ENCODE measurements at regions of chr2 and their contacts with region 1.

Region 1: DNA sequence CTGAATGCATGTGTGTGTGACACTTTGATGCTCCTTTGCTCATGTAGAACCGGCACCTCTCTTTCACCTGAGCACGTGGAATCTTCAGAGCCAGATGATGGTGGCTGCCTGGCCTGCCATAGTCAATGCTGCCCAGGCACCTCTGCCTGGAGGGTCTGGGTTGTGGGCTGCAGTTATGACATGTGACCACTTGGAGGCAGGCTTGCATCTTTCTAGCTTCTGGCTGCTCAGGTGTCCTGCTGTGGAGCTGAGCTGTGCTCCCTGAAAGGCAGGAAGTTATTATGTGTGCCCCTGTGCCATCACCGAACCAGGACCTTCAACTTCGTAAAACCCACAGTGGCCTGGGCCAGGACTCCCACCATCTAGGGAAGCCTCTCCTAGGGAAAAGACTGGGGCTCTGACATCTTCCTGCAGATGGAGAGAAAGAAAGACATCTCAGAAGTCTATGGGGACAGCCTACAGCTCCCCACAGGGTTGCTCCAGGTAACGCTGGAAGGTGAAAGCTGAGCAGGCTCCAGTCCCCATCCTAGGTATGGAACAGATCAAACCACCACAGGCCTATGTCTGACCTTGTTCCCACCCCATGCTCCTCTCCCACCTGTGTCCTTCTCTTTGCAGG is 30.2 kb downstream of the PSD4 start:
- DNase-seq: peak; percentile 56 to 89
- ATAC-seq: peak; percentile 79 to 92 (median 86)
- H3K4me3 ChIP-seq: no peak overlapping the region
- H3K4me3 Mint-ChIP-seq: no peak overlapping the region
- H3K27ac ChIP-seq: peak overlapping the region; percentile 24
- H3K27ac Mint-ChIP-seq: peak overlapping the region; percentile 70 to 82
- H3K4me1 ChIP-seq: peaks cover 8% of the 10 kb centered on the region
- H3K4me1 Mint-ChIP-seq: peaks cover 7 to 25% of the 10 kb centered on the region in 2 donors
- H3K27me3 ChIP-seq: no peaks in the 10 kb centered on the region
- H3K27me3 Mint-ChIP-seq: no peaks in the 10 kb centered on the region
- CTCF ChIP-seq: peak; percentile 70

Region 2: DNA sequence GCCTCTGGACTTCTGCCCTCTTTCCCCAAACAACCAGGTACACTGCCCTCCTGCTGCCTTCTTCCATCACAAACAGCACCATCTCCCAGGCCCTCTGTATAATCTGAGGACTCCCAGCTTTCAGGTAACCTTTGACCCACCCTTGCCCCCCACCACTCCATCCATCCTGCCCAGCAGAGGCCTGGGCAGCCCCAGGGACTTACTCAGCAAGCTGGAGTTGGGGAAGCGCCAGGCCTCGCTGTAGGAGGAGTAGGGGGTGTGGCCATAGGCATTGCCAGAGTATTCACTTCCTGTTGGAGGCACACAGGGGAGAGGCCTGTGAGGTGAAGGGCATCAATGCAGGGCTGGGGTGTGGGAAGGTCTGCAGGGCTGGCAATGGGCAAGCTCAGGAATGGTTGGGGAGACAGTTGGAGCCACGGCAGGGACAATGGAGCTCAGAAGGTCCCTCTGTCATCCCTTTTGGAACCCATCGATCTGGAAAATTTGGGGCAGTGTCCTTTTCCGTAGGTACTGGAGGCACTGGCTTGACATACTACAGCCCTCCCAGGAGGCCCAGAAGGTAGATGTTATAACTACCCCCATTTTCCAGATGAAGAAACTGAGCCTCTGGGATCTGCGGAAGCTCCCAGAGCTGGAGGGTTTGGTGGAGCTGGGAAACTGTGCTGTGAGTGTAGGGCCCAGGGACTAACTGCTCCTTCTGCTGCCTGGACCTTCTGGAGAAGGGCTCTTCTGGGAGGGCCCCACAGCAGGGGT is 16.1 kb after region 1 on chr2:
- intact Hi-C with region 1: no loop called
- DNase-seq: no peak
- ATAC-seq: no peak
- H3K4me3 ChIP-seq: no peak overlapping the region
- H3K4me3 Mint-ChIP-seq: no peak overlapping the region
- H3K27ac ChIP-seq: no peak overlapping the region
- H3K27ac Mint-ChIP-seq: no peak overlapping the region
- H3K4me1 ChIP-seq: peaks cover 23% of the 10 kb centered on the region
- H3K4me1 Mint-ChIP-seq: peaks cover 16 to 24% of the 10 kb centered on the region in 2 donors
- H3K27me3 ChIP-seq: no peaks in the 10 kb centered on the region
- H3K27me3 Mint-ChIP-seq: no peaks in the 10 kb centered on the region
- CTCF ChIP-seq: no peak

Region 3: GRCh38 chr2:113390124-113390849 is 186.3 kb after region 1 on chr2:
- intact Hi-C with region 1: loop called (anchors 5 kb)
- DNase-seq: peak in 1 of 2 donors; percentile 88
- ATAC-seq: peak; percentile 98 to 99 (median 99)
- H3K4me3 ChIP-seq: peak overlapping the region; percentile 29
- H3K4me3 Mint-ChIP-seq: peak overlapping the region; percentile 88
- H3K27ac ChIP-seq: peak overlapping the region; percentile 5
- H3K27ac Mint-ChIP-seq: peak overlapping the region; percentile 73 to 79
- H3K4me1 ChIP-seq: peaks cover 3% of the 10 kb centered on the region
- H3K4me1 Mint-ChIP-seq: peaks cover 10 to 16% of the 10 kb centered on the region in 2 donors
- H3K27me3 ChIP-seq: no peaks in the 10 kb centered on the region
- H3K27me3 Mint-ChIP-seq: peaks cover 12 to 16% of the 10 kb centered on the region in 2 donors
- CTCF ChIP-seq: peak; percentile 95

Measured in natural killer cell (primary cell).